OCI-LY7 (cell line): ENCODE measurements at regions of chr20 and their contacts with region 1.

Region 1: DNA sequence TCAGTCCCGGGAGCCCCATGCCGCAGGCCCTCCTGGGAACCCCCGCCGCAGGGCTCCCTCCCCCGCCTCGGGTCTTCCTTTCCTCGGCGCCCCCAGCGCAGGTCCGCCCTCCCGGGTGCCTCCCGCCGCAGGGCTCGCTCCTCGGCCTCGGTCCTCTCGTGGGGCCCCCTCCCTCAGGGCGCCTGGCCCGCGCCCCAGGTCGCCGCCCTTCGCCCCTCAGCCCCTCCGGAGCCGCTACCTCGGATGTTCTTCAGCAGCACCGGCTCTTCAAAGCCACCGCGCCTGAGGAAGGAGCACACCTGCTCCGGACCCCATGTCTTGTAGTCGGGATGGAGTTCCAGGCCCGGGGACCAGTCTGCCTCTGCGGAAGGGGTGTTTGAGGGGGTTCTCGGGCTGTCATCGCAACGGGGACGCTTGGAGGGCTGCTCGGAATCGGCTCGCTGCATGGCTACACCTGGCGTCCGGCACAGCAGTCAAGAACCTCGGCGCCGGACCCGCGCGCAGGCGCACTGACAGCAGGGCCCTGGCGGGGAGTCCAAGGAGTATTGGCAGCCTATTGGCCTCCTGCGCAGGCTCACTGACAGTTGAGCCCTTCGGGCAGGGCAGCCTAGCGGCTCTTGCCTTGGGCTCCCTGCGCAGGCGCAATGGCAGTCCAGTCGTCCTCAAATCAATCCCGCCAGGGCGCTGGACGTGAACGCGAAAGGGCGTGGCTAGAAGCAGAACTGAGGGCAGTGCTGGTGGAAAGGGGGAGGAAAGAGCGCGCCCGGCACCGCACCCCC is at the start of gene SAMHD1:
- DNase-seq: peak; percentile 99
- H3K4me3 ChIP-seq: peak within 1 kb of the TSS; percentile 77
- H3K27ac ChIP-seq: peak within 1 kb of the TSS; percentile 41
- H3K4me1 ChIP-seq: peaks cover 28% of the 10 kb centered on the region
- CTCF ChIP-seq: no peak
- total RNA-seq, gene SAMHD1: 7.9 and 10.6 TPM in 2 replicates

Region 2: DNA sequence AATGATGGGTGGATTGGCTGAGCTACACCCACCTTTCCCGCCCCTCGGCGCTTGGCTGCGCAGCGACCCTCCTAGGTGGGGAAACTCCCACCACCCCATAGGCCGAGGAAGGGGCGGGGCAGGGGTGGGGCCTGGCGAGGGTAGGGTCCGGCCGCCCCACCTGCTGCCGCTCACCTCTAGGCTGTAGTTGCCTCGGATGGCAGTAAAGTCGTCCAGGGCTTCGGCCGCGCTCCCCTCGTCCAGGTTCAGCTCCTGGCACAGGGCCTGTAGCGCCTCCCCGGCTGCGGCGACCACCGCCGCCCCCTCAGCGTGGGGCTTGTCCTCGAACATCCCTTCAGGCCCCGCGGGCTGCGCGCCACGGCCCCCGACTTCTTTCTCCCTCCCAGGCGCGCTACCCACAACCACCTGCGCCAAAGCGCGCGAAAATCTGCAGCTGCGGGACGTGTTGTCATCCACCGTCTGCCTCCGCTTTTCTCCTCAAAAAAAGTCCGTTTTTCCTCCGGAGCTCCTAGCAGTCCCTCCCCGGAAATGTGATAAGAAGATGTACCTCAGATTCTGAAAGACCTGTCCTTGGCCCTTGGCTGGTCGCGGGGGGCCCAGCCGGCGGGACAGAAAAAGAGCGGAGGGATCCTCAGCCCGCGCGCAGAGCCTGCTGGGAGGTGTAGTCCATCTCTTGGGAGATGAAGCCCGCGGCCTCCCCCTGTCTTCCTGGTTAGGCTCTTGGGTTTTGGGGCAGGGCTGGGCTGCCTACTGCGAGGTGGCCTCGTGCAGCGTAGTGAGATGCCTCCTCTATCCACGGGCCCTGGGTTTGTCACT is 144.4 kb after region 1 on chr20 and contains the start of gene RBL1:
- CTCF ChIA-PET with region 1: no interaction called
- POLR2A ChIA-PET with region 1: no interaction called
- intact Hi-C with region 1: loop called (anchors 5 kb)
- DNase-seq: peak; percentile 96
- H3K4me3 ChIP-seq: peak within 1 kb of the TSS; percentile 83
- H3K27ac ChIP-seq: peak within 1 kb of the TSS; percentile 86
- H3K4me1 ChIP-seq: peaks cover 37% of the 10 kb centered on the region
- CTCF ChIP-seq: peak; percentile 31; the same call in 1 of the 2 replicates
- total RNA-seq, gene RBL1: 48.9 and 63.0 TPM in 2 replicates

Region 3: GRCh38 chr20:37526238-37526838 is 575.0 kb after region 1 on chr20:
- CTCF ChIA-PET with region 1: no interaction called
- POLR2A ChIA-PET with region 1: no interaction called
- intact Hi-C with region 1: no loop called
- DNase-seq: peak; percentile 45
- H3K4me3 ChIP-seq: peak overlapping the region; percentile 81
- H3K27ac ChIP-seq: peak overlapping the region; percentile 3
- H3K4me1 ChIP-seq: peaks cover 27% of the 10 kb centered on the region
- CTCF ChIP-seq: no peak